Activated CD8-positive, alpha-beta T cell treated with anti-CD3 and anti-CD28 coated beads for 36 hours (primary cell): ENCODE measurements at regions of chr19 and their contacts with region 1.

Region 1: GRCh38 chr19:8412783-8413628 is at the start of gene MARCHF2:
- DNase-seq: peak; percentile 96
- ATAC-seq: peak; percentile 100
- H3K4me3 Mint-ChIP-seq: peak within 1 kb of the TSS; percentile 60
- H3K27ac Mint-ChIP-seq: no peak within 1 kb of the TSS
- H3K4me1 Mint-ChIP-seq: peaks cover 7% of the 10 kb centered on the region
- H3K27me3 Mint-ChIP-seq: no peaks in the 10 kb centered on the region
- CTCF ChIP-seq: peak; percentile 59
- total RNA-seq, gene MARCHF2: 8.0 to 8.6 TPM

Region 2: GRCh38 chr19:8444645-8445487 is 31.9 kb after region 1 on chr19 and contains the start of gene HNRNPM:
- CTCF ChIA-PET with region 1: interaction called, 8 read pairs
- POLR2A ChIA-PET with region 1: interaction called, 10 read pairs
- intact Hi-C with region 1: no loop called
- DNase-seq: peak; percentile 100
- ATAC-seq: peak; percentile 96
- H3K4me3 Mint-ChIP-seq: peak within 1 kb of the TSS; percentile 95
- H3K27ac Mint-ChIP-seq: peak within 1 kb of the TSS; percentile 90
- H3K4me1 Mint-ChIP-seq: peaks cover 34% of the 10 kb centered on the region
- H3K27me3 Mint-ChIP-seq: no peaks in the 10 kb centered on the region
- CTCF ChIP-seq: no peak
- total RNA-seq, gene HNRNPM: 242 to 254 TPM

Region 3: DNA sequence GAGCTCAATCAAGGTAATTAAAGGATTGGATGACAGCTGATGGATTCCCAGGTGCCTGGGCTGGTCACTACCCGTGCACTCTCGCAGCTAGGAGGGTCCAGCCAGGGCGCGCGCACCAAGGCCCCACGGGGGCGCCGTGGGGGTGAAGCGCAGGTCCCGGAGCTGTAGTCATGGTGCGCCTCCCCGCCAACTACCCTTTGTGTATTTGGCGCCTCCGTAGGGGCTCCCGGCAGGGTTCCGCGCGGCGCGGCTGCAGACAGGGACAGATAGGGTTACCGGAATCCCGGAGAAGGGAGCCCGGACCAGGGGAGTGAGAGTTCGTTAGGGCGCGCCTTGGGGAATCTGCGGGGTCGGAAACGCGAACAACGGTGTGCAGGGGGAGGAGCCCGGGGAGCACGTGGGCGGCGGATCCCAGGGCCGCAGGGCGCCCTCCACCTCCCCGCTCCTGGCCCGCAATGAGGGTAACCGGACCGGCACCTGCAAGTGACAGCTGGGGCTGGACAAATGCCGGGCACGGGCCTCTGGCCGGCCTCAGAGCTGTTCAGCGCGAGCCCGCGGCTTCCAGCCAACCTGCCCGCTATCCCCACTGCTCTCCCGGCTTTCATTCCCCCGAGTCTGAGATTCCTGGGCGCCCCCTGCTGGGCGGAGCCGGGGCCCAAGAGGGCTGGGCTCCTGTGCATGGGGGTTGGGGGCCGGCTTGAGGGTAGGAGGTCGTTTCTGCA is 92.8 kb after region 1 on chr19:
- CTCF ChIA-PET with region 1: interaction called, 10 read pairs
- POLR2A ChIA-PET with region 1: no interaction called
- intact Hi-C with region 1: loop called (anchors 5 kb)
- DNase-seq: peak; percentile 75
- ATAC-seq: peak; percentile 75
- H3K4me3 Mint-ChIP-seq: peak overlapping the region; percentile 86
- H3K27ac Mint-ChIP-seq: peak overlapping the region; percentile 85
- H3K4me1 Mint-ChIP-seq: peaks cover 6% of the 10 kb centered on the region
- H3K27me3 Mint-ChIP-seq: no peaks in the 10 kb centered on the region
- CTCF ChIP-seq: peak; percentile 73